GM12878 (cell line): ENCODE measurements at regions of chr1 and their contacts with region 1.

Region 1: DNA sequence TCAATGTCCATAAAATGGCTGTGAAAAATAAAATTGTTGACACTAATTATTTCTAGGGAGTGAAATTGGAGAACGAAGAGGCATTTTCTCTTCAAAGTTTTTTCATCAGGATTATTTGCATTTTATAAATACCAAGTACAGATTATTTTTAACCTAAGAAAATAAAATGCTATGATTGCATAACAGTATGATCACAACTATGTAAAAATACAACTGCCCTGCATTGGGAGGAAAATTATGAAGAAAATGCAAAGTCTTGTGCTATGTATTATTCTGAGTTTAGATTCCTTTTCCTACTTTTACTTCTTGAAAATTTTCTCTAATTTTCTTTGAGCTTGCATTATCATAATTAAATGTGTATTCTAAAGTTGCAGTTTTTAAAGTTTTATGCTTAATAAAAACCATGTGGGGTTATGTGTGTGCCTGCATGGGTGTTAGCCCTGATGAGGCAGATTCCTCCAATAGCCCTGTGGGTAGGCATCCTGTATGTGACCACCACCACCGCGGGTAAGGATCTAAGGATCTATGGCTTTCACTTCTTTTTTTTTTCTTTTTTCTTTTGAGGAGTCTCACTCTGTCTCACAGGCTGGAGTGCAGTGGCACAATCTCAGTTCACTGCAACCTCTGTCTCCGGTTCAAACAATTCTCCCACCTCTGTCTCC is 24.7 kb downstream of the STX6 start:
- DNase-seq: no peak
- ATAC-seq: no peak
- H3K4me3 ChIP-seq: no peak overlapping the region
- H3K27ac ChIP-seq: no peak overlapping the region
- H3K4me1 ChIP-seq: no peaks in the 10 kb centered on the region
- H3K27me3 ChIP-seq: no peaks in the 10 kb centered on the region
- CTCF ChIP-seq: no peak
- EP300 ChIP-seq: no peak
- POLR2A ChIP-seq: no peak
- RAD21 ChIP-seq: no peak

Region 2: DNA sequence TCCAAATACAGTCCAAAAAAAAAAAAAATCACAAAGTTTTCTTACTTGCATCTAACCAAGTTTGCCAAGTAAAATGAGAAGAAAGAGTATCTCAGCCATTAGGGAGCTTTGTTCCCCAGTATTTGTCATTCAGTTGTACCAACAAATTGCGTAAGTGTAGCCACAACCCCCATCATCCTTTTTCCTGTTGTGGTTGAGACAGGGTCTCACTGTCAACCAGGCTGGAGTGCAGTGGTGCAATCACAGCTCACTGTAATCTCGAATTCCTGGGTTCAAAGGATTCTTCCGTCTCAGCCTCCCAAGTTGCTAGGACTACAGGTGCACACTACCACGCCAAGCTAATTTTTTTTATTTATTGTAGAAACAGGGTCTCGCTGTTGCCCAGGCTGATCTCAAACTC is 15.2 kb after region 1 on chr1:
- CTCF ChIA-PET with region 1: interaction called, 7 read pairs
- POLR2A ChIA-PET with region 1: interaction called, 5 read pairs
- RAD21 ChIA-PET with region 1: no interaction called
- SMC1A ChIA-PET with region 1: interaction called, 15 read pairs
- in situ Hi-C with region 1: no loop called
- intact Hi-C with region 1: no loop called
- DNase-seq: no peak
- ATAC-seq: no peak
- H3K4me3 ChIP-seq: no peak overlapping the region
- H3K27ac ChIP-seq: no peak overlapping the region
- H3K4me1 ChIP-seq: peaks cover 35% of the 10 kb centered on the region
- H3K27me3 ChIP-seq: no peaks in the 10 kb centered on the region
- CTCF ChIP-seq: no peak
- EP300 ChIP-seq: no peak
- POLR2A ChIP-seq: no peak
- RAD21 ChIP-seq: no peak